ENCODE measurements at regions of chr3 and their contacts with region 1.

Region 1: GRCh38 chr3:112734718-112735350 is 93.9 kb upstream of the CCDC80 start:
- DNase-seq: peak; percentile 65
- H3K4me3 ChIP-seq: no peak overlapping the region; a peak in 1 of 4 replicates
- H3K27ac ChIP-seq: no peak overlapping the region
- H3K4me1 ChIP-seq: no peaks in the 10 kb centered on the region; a peak in 1 of 4 replicates
- H3K27me3 ChIP-seq: no peaks in the 10 kb centered on the region
- CTCF ChIP-seq: peak; percentile 76
- EP300 ChIP-seq: no peak
- RAD21 ChIP-seq: peak; percentile 91

Region 2: GRCh38 chr3:112709911-112710310 is 24.9 kb before region 1 on chr3:
- CTCF ChIA-PET with region 1: interaction called, 11 read pairs
- POLR2A ChIA-PET with region 1: no interaction called
- DNase-seq: no peak
- H3K4me3 ChIP-seq: no peak overlapping the region
- H3K27ac ChIP-seq: no peak overlapping the region
- H3K4me1 ChIP-seq: no peaks in the 10 kb centered on the region
- H3K27me3 ChIP-seq: no peaks in the 10 kb centered on the region
- CTCF ChIP-seq: no peak
- EP300 ChIP-seq: no peak
- RAD21 ChIP-seq: no peak

Region 3: GRCh38 chr3:112746675-112747280 is 11.9 kb after region 1 on chr3:
- CTCF ChIA-PET with region 1: interaction called, 31 read pairs
- POLR2A ChIA-PET with region 1: no interaction called
- DNase-seq: no peak
- H3K4me3 ChIP-seq: no peak overlapping the region
- H3K27ac ChIP-seq: peak overlapping the region; percentile 19 to 36
- H3K4me1 ChIP-seq: peaks cover 0 to 3% of the 10 kb centered on the region in 2 experiments; a peak in 2 of 4 replicates
- H3K27me3 ChIP-seq: no peaks in the 10 kb centered on the region
- CTCF ChIP-seq: no peak
- EP300 ChIP-seq: no peak
- RAD21 ChIP-seq: no peak

Region 4: GRCh38 chr3:112973325-112974177 is 238.7 kb after region 1 on chr3:
- CTCF ChIA-PET with region 1: interaction called, 83 read pairs
- POLR2A ChIA-PET with region 1: no interaction called
- DNase-seq: no peak
- H3K4me3 ChIP-seq: no peak overlapping the region
- H3K27ac ChIP-seq: no peak overlapping the region
- H3K4me1 ChIP-seq: no peaks in the 10 kb centered on the region
- H3K27me3 ChIP-seq: no peaks in the 10 kb centered on the region; the same call in 1 of the 2 replicates
- CTCF ChIP-seq: no peak
- EP300 ChIP-seq: no peak; a peak in 1 of 4 replicates
- RAD21 ChIP-seq: no peak

Region 5: GRCh38 chr3:112979240-112979832 is 244.5 kb after region 1 on chr3:
- CTCF ChIA-PET with region 1: interaction called, 83 read pairs
- POLR2A ChIA-PET with region 1: no interaction called
- DNase-seq: peak; percentile 16
- H3K4me3 ChIP-seq: no peak overlapping the region; a peak in 1 of 4 replicates
- H3K27ac ChIP-seq: no peak overlapping the region
- H3K4me1 ChIP-seq: no peaks in the 10 kb centered on the region; a peak in 1 of 4 replicates
- H3K27me3 ChIP-seq: no peaks in the 10 kb centered on the region
- CTCF ChIP-seq: peak; percentile 84
- EP300 ChIP-seq: no peak
- RAD21 ChIP-seq: peak; percentile 77

Region 6: GRCh38 chr3:112984485-112984884 is 249.7 kb after region 1 on chr3:
- CTCF ChIA-PET with region 1: interaction called, 83 read pairs
- POLR2A ChIA-PET with region 1: no interaction called
- DNase-seq: no peak
- H3K4me3 ChIP-seq: no peak overlapping the region
- H3K27ac ChIP-seq: no peak overlapping the region
- H3K4me1 ChIP-seq: no peaks in the 10 kb centered on the region
- H3K27me3 ChIP-seq: no peaks in the 10 kb centered on the region
- CTCF ChIP-seq: no peak
- EP300 ChIP-seq: no peak
- RAD21 ChIP-seq: no peak

Region 7: DNA sequence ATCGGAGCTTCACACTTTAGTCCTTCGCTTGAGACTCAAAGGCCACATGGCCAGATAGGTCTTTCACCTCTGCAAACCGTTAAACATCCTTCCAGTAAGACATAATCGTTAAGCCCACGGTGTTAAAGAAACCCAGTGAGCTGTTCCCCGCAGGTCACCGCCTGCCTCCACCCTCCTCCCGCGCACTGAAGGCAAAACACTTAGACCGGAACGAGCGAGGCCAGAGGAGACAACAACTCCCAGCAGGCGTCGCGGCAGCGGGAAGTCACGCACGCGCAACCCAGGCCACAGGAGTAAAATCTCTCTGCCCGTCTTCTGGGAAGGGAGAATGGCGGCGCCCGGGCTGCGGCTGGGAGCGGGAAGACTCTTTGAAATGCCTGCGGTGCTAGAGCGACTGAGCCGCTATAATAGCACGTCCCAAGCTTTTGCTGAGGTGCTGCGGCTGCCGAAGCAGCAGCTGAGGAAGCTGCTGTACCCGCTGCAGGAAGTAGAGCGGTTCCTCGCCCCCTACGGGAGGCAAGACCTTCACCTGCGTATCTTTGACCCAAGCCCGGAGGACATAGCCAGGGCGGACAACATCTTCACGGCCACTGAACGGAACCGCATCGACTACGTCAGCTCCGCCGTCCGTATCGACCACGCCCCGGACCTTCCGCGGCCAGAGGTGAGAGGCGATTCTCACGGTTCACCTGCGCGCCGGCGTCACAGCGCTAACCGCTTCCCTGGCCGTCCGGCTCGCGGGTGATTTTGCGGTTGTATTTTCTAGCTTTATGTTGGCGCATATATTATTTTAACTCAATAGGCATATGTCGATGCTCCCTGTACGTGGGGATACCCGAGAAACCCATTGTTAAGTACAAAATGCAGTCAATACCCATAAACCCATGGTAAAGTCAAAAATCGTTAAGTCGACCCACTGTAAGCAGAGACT is 256.1 kb after region 1 on chr3 and contains the start of gene GTPBP8:
- CTCF ChIA-PET with region 1: interaction called, 17 read pairs
- POLR2A ChIA-PET with region 1: interaction called, 3 read pairs
- DNase-seq: peak; percentile 87
- H3K4me3 ChIP-seq: peak within 1 kb of the TSS; percentile 82 to 88
- H3K27ac ChIP-seq: peak within 1 kb of the TSS; percentile 88 to 99
- H3K4me1 ChIP-seq: peaks cover 9 to 12% of the 10 kb centered on the region in 2 experiments; a peak in 3 of 4 replicates
- H3K27me3 ChIP-seq: no peaks in the 10 kb centered on the region
- CTCF ChIP-seq: peak; percentile 25; the same call in 1 of the 2 replicates
- EP300 ChIP-seq: no peak
- RAD21 ChIP-seq: 0 out of 2 replicates have a peak, but pooled peaks have one; percentile 15
- polyA plus RNA-seq, gene GTPBP8: 19.2 and 20.1 TPM in 2 replicates